Esophagus muscularis mucosa (tissue), 4 donors: ENCODE measurements at regions of chr11 and their contacts with region 1.

Region 1: GRCh38 chr11:122202951-122203456 is 87.0 kb upstream of the BLID start:
- DNase-seq: peak; percentile 94
- H3K4me3 ChIP-seq: peak overlapping the region; percentile 46 to 60 (median 56)
- H3K27ac ChIP-seq: peak overlapping the region; percentile 77 to 82 (median 78)
- H3K4me1 ChIP-seq: peaks cover 18 to 63% (median 55%) of the 10 kb centered on the region in 4 donors
- H3K27me3 ChIP-seq: no peaks in the 10 kb centered on the region
- CTCF ChIP-seq: peak in 2 of 3 experiments; percentile 98
- EP300 ChIP-seq: no peak
- POLR2A ChIP-seq: no peak

Region 2: DNA sequence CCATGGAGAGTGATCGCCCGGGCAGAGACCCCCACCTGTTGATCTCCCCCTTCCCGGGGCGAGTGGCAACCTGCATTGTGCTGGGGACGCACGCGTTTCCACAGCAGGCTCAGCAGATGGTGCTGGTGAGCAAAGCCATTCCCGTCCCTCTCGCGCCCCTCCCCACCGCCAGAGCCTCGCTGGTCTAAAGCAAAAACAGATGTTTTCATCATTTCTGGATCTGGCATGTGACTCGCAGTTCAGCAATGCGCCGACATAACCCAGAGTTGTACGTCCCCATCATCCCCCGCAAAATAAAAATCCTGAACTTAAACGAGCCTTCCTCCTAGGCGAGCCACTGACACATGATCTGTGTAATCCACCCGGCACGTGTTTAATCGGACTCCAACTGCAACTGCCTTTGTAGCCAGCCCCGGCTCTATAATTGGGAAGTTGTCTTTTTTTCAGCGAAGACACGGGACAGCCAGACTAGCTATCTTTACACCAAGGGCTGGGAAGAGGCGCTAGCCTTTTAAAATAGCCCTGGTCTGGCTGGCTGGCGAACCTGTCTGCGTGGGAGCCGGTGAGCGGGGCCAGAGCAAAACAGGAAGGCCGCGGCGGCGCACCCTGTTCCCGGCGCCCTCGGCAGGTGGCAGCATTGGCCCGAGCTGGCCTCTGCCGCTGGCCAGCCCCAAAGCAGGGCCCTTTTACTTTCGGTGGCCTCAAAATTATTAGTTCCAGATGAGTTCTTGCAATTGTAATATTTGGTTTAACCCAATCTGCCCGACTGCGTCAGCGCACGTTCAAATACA is 547.3 kb before region 1 on chr11:
- intact Hi-C with region 1: loop called (anchors 5 kb)
- DNase-seq: peak; percentile 96
- H3K4me3 ChIP-seq: peak overlapping the region; percentile 47 to 61 (median 51)
- H3K27ac ChIP-seq: peak overlapping the region; percentile 86 to 92 (median 88)
- H3K4me1 ChIP-seq: peaks cover 10 to 34% (median 31%) of the 10 kb centered on the region in 4 donors
- H3K27me3 ChIP-seq: no peaks in the 10 kb centered on the region
- CTCF ChIP-seq: peak; percentile 80 to 93 (median 91)
- EP300 ChIP-seq: peak; percentile 36
- POLR2A ChIP-seq: no peak

Region 3: GRCh38 chr11:121722431-121723245 is 480.4 kb before region 1 on chr11:
- intact Hi-C with region 1: loop called (anchors 10 kb)
- DNase-seq: peak; percentile 96
- H3K4me3 ChIP-seq: peak overlapping the region; percentile 48 to 62 (median 58)
- H3K27ac ChIP-seq: peak overlapping the region; percentile 90 to 95 (median 92)
- H3K4me1 ChIP-seq: peaks cover 5 to 41% (median 32%) of the 10 kb centered on the region in 4 donors
- H3K27me3 ChIP-seq: no peaks in the 10 kb centered on the region
- CTCF ChIP-seq: peak in 1 of 3 experiments; percentile 20
- EP300 ChIP-seq: peak; percentile 95
- POLR2A ChIP-seq: peak; percentile 66

Region 4: GRCh38 chr11:121892131-121892681 is 310.8 kb before region 1 on chr11:
- intact Hi-C with region 1: loop called (anchors 10 kb)
- DNase-seq: no peak
- H3K4me3 ChIP-seq: no peak overlapping the region
- H3K27ac ChIP-seq: peak overlapping the region in 1 of 4 donors; percentile 57
- H3K4me1 ChIP-seq: peaks cover 8 to 30% (median 26%) of the 10 kb centered on the region in 4 donors
- H3K27me3 ChIP-seq: no peaks in the 10 kb centered on the region
- CTCF ChIP-seq: no peak
- EP300 ChIP-seq: no peak
- POLR2A ChIP-seq: no peak

Region 5: GRCh38 chr11:122020902-122021301 is 182.1 kb before region 1 on chr11:
- intact Hi-C with region 1: loop called (anchors 5 kb)
- DNase-seq: no peak
- H3K4me3 ChIP-seq: no peak overlapping the region
- H3K27ac ChIP-seq: no peak overlapping the region
- H3K4me1 ChIP-seq: peaks cover 0 to 3% (median 0%) of the 10 kb centered on the region in 4 donors
- H3K27me3 ChIP-seq: no peaks in the 10 kb centered on the region
- CTCF ChIP-seq: peak; percentile 39 to 53 (median 49)
- EP300 ChIP-seq: no peak
- POLR2A ChIP-seq: no peak

Region 6: DNA sequence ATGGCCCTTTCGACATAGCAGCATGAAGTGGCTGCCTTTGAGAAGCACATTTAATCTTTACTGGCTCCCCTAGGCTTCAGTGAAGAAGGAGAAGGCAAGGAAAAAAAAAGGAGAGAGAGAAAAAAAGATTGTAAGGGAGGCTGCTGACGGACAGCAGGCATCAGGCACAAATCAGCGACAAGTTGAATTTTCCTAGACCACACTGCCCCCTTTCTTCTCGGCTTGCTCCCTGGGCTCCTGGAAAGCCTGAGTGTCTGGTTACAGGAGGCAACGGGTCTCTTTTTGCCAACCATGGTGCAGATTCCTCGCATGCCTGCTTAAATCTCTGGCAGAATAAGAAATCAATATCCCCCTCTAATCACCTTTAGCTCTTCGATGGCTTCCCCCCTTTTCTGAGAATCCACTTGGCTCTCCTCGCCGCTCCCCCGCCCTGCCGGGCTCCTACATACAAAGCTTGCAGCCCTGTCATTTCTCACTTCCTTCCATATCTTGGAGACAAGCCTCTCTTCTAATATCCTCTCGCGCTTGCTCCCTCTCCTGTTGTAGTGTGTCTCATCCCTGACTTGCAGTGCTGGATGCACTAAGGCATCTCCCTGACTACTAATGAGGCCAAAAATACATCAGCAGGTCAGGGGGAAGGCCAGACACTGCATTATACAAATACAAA is 101.2 kb before region 1 on chr11:
- intact Hi-C with region 1: loop called (anchors 5 kb)
- DNase-seq: no peak
- H3K4me3 ChIP-seq: peak overlapping the region; percentile 63 to 69 (median 63)
- H3K27ac ChIP-seq: peak overlapping the region; percentile 88 to 93 (median 92)
- H3K4me1 ChIP-seq: peaks cover 7 to 28% (median 26%) of the 10 kb centered on the region in 4 donors
- H3K27me3 ChIP-seq: no peaks in the 10 kb centered on the region
- CTCF ChIP-seq: peak; percentile 67 to 78 (median 74)
- EP300 ChIP-seq: no peak
- POLR2A ChIP-seq: no peak

Region 7: DNA sequence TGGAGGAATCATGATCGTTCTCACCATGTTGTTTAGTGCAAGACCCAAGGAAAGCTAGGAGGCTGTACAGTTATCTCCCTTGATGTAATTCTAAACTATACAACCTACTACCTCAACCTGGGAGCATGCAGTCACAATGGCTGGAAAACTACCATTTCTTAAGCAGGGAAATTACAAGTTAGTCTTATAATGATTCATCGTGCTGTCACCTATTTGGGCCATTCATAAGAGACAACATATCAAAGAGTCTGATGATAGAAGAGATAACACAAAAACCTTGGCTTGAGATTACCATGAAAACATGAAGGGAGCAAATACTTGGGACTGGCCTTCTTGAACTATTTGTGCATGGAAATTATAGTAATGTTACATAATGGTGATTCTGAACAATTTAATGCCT is 56.5 kb before region 1 on chr11:
- intact Hi-C with region 1: loop called (anchors 5 kb)
- DNase-seq: no peak
- H3K4me3 ChIP-seq: no peak overlapping the region
- H3K27ac ChIP-seq: no peak overlapping the region
- H3K4me1 ChIP-seq: peaks cover 0 to 17% (median 13%) of the 10 kb centered on the region in 4 donors
- H3K27me3 ChIP-seq: no peaks in the 10 kb centered on the region
- CTCF ChIP-seq: no peak
- EP300 ChIP-seq: no peak
- POLR2A ChIP-seq: no peak